ENCODE measurements at regions of chr4 and their contacts with region 1.

Region 1: DNA sequence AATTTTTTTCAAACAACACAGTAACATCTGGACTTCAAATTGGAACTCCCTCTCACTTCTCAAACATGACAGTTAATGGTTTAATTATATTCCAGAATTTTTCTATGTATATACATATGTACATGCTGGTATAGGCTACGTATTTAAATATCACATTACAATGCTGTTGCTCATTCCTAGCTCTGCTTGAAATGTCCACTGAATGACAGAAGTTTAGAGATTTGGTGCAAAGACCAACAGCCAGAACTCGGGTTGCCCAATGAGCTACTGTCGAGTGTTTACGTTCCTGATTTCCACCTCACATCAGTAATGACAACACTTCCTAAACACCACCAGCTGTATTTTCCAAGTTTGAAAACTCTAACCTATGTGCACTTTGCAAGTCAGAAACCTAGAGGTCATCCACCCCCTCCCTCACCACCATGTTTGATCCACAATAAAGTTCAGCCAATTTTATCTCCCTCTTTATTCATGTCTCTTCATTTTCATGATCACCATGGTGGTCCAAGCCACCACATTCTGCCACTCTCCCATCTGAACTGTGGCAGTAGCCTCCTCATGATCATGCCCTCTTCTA is 49.3 kb upstream of the RPL34 start:
- DNase-seq: no peak
- H3K4me3 ChIP-seq: no peak overlapping the region
- H3K27ac ChIP-seq: no peak overlapping the region
- H3K4me1 ChIP-seq: no peaks in the 10 kb centered on the region
- H3K27me3 ChIP-seq: peaks cover 49% of the 10 kb centered on the region
- CTCF ChIP-seq: no peak
- EP300 ChIP-seq: no peak
- RAD21 ChIP-seq: no peak

Region 2: DNA sequence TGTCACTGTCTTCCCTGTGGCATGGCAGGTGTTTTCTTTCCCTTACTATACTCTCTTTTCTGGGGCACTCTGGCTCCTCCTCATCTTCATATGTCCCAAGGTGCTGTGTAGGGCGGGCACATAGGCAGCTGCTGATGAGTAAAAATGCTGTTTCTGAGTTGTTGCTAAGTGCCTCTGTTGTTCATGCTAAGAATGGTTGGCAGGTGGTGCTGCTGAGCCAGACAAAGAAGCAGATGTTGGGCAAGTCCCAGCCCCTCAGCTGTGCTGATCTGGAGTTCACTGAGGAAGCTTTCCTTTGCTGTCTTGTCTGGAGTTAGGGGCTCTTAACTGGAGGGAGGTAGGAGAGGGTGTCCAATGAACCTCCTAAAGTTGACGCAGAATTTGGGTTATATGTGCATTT is 540.7 kb before region 1 on chr4:
- CTCF ChIA-PET with region 1: interaction called, 76 read pairs
- POLR2A ChIA-PET with region 1: no interaction called
- DNase-seq: peak; percentile 40
- H3K4me3 ChIP-seq: no peak overlapping the region
- H3K27ac ChIP-seq: no peak overlapping the region
- H3K4me1 ChIP-seq: peaks cover 0 to 6% of the 10 kb centered on the region in 2 experiments; a peak in 1 of 4 replicates
- H3K27me3 ChIP-seq: no peaks in the 10 kb centered on the region
- CTCF ChIP-seq: peak; percentile 41
- EP300 ChIP-seq: no peak
- RAD21 ChIP-seq: peak; percentile 81

Region 3: GRCh38 chr4:108054025-108054638 is 516.9 kb before region 1 on chr4:
- CTCF ChIA-PET with region 1: interaction called, 26 read pairs
- POLR2A ChIA-PET with region 1: no interaction called
- DNase-seq: no peak
- H3K4me3 ChIP-seq: no peak overlapping the region
- H3K27ac ChIP-seq: no peak overlapping the region
- H3K4me1 ChIP-seq: no peaks in the 10 kb centered on the region; a peak in 1 of 4 replicates
- H3K27me3 ChIP-seq: peaks cover 66% of the 10 kb centered on the region
- CTCF ChIP-seq: no peak
- EP300 ChIP-seq: no peak
- RAD21 ChIP-seq: no peak

Region 4: GRCh38 chr4:108060164-108060563 is 510.9 kb before region 1 on chr4:
- CTCF ChIA-PET with region 1: interaction called, 26 read pairs
- POLR2A ChIA-PET with region 1: no interaction called
- DNase-seq: peak; percentile 54
- H3K4me3 ChIP-seq: no peak overlapping the region
- H3K27ac ChIP-seq: no peak overlapping the region
- H3K4me1 ChIP-seq: no peaks in the 10 kb centered on the region
- H3K27me3 ChIP-seq: peaks cover 64% of the 10 kb centered on the region
- CTCF ChIP-seq: peak; percentile 37
- EP300 ChIP-seq: no peak
- RAD21 ChIP-seq: peak; percentile 89

Region 5: DNA sequence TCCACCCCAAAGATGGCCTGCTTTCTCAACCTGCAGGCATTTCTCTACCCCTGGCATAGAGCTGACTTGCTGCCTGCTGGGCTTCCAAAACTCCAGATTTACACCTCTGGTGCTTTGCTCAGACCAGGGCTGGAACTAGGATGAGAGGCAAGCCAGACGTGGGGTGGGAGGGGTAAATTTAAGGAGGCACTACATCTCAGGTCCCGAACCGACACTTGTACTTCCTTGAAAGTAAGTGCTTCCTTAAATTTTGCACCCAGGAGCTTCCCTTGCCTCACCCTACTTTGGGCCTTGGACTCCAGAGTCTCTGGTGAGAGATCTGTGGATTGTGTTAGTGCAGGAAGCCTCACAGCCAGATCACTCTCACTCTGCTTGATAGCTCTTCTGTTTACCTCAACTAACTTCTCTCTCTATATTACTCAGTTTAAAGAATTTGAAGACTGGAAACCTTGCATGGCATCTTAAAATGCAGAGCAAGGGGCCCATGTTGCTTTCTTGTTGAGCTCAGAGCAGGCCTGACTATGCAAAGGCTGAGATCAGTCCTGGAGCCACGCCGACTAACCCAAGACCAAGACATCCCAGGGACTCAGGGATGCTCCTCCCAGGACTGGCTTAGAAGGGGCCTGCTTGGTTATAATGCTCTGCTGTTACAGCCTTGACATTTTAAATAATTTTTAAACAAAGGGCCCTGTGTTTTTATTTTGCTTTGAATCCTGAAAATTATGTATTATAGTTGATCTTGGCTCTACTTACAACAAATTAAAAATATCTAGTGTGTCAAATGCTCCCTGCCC is 257.3 kb before region 1 on chr4:
- CTCF ChIA-PET with region 1: no interaction called
- POLR2A ChIA-PET with region 1: no interaction called
- DNase-seq: no peak
- H3K4me3 ChIP-seq: no peak overlapping the region
- H3K27ac ChIP-seq: no peak overlapping the region
- H3K4me1 ChIP-seq: no peaks in the 10 kb centered on the region
- H3K27me3 ChIP-seq: no peaks in the 10 kb centered on the region
- CTCF ChIP-seq: no peak
- EP300 ChIP-seq: no peak
- RAD21 ChIP-seq: no peak

Region 6: DNA sequence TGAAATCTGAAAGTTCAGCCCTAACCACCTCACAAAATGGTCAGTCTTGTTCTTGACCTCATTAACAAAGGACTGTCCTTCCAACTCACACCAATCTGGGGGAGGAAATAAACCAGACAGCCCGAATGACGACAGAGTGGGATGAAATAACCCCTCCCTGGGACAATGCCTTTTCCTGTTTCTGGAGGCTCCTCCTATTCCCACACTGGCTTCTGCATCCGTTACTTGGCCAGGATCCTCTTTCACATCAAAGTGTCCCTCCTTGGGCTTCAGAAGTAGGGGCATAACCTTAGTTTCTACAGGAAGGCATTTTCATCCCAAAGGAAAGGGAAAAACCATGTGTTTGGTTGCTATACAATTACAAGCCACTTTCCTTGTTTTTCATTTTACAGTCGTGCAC is 10.5 kb before region 1 on chr4:
- CTCF ChIA-PET with region 1: interaction called, 14 read pairs
- POLR2A ChIA-PET with region 1: no interaction called
- DNase-seq: no peak
- H3K4me3 ChIP-seq: peak overlapping the region in 1 of 2 experiments; percentile 13; a peak in 1 of 4 replicates
- H3K27ac ChIP-seq: no peak overlapping the region
- H3K4me1 ChIP-seq: no peaks in the 10 kb centered on the region
- H3K27me3 ChIP-seq: no peaks in the 10 kb centered on the region; the same call in 1 of the 2 replicates
- CTCF ChIP-seq: no peak
- EP300 ChIP-seq: no peak
- RAD21 ChIP-seq: no peak

Region 7: GRCh38 chr4:108581083-108581482 is 10.0 kb after region 1 on chr4:
- CTCF ChIA-PET with region 1: interaction called, 17 read pairs
- POLR2A ChIA-PET with region 1: no interaction called
- DNase-seq: no peak
- H3K4me3 ChIP-seq: no peak overlapping the region
- H3K27ac ChIP-seq: no peak overlapping the region
- H3K4me1 ChIP-seq: no peaks in the 10 kb centered on the region
- H3K27me3 ChIP-seq: no peaks in the 10 kb centered on the region; the same call in 1 of the 2 replicates
- CTCF ChIP-seq: no peak
- EP300 ChIP-seq: no peak
- RAD21 ChIP-seq: no peak

Region 8: GRCh38 chr4:108586778-108587177 is 15.7 kb after region 1 on chr4:
- CTCF ChIA-PET with region 1: interaction called, 17 read pairs
- POLR2A ChIA-PET with region 1: no interaction called
- DNase-seq: no peak
- H3K4me3 ChIP-seq: no peak overlapping the region
- H3K27ac ChIP-seq: no peak overlapping the region
- H3K4me1 ChIP-seq: peaks cover 0 to under 1% of the 10 kb centered on the region in 2 experiments; a peak in 1 of 4 replicates
- H3K27me3 ChIP-seq: no peaks in the 10 kb centered on the region
- CTCF ChIP-seq: no peak
- EP300 ChIP-seq: no peak
- RAD21 ChIP-seq: no peak